ENCODE measurements at regions of chrX and their contacts with region 1.

Region 1: DNA sequence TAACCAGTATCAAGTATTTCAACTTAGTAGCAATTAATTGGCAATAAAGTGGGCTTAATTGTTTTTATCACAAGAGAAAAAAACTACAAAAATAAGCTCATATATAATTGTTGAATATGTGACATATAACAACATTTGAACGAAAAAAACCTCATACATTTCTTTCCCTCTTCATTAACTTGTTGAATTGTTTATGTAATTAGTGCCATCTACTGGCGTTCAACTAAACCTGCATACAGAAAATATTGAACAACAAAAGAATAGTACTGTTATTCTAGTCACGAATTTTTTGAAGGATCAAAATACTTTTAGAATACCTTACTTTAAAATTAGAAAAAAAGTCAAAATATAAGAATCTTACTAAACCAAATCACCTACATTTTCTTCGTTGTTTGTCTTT is 586.5 kb upstream of the FTHL17 start:
- DNase-seq: no peak
- H3K4me3 ChIP-seq: no peak overlapping the region
- H3K27ac ChIP-seq: no peak overlapping the region
- H3K4me1 ChIP-seq: no peaks in the 10 kb centered on the region
- H3K27me3 ChIP-seq: no peaks in the 10 kb centered on the region
- CTCF ChIP-seq: peak in 2 of 3 experiments; percentile 49 to 52
- EP300 ChIP-seq: no peak
- POLR2A ChIP-seq: no peak

Region 2: GRCh38 chrX:31036895-31037294 is 621.5 kb before region 1 on chrX:
- intact Hi-C with region 1: loop called (anchors 5 kb)
- DNase-seq: no peak
- H3K4me3 ChIP-seq: no peak overlapping the region
- H3K27ac ChIP-seq: no peak overlapping the region
- H3K4me1 ChIP-seq: no peaks in the 10 kb centered on the region
- H3K27me3 ChIP-seq: no peaks in the 10 kb centered on the region
- CTCF ChIP-seq: peak; percentile 38 to 52 (median 44)
- EP300 ChIP-seq: no peak
- POLR2A ChIP-seq: no peak

Region 3: GRCh38 chrX:31217084-31217483 is 441.3 kb before region 1 on chrX:
- intact Hi-C with region 1: loop called (anchors 5 kb)
- DNase-seq: no peak
- H3K4me3 ChIP-seq: no peak overlapping the region
- H3K27ac ChIP-seq: no peak overlapping the region
- H3K4me1 ChIP-seq: peaks cover 9 to 24% (median 18%) of the 10 kb centered on the region in 4 donors
- H3K27me3 ChIP-seq: no peaks in the 10 kb centered on the region
- CTCF ChIP-seq: no peak
- EP300 ChIP-seq: no peak
- POLR2A ChIP-seq: no peak

Region 4: DNA sequence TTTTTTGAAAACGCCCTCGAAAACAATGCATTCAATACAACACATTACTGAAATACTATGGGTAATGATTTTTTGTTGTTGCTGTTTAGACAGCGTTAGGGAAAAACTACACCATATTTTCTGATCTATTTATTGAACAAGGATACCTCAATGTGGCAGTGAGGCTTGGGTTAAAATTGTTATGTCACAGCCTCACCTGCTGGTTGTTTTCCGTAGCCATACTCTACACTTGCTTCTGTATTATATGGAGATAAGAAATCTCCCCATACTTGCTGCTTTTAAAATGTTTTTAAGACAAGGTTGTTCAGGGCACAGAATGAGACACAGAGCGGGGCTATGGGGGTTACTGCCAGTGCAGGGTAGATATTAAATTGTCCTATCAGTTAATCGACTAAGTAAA is 365.0 kb before region 1 on chrX:
- intact Hi-C with region 1: no loop called
- DNase-seq: no peak
- H3K4me3 ChIP-seq: no peak overlapping the region
- H3K27ac ChIP-seq: no peak overlapping the region
- H3K4me1 ChIP-seq: no peaks in the 10 kb centered on the region
- H3K27me3 ChIP-seq: no peaks in the 10 kb centered on the region
- CTCF ChIP-seq: no peak
- EP300 ChIP-seq: no peak
- POLR2A ChIP-seq: no peak

Measured in esophagus muscularis mucosa (tissue), 4 donors.